ENCODE measurements at regions of chr19 and their contacts with region 1.

Region 1: GRCh38 chr19:4791170-4792018 is at the start of gene FEM1A:
- DNase-seq: peak; percentile 99
- H3K4me3 Mint-ChIP-seq: peak within 1 kb of the TSS; percentile 80
- H3K27ac Mint-ChIP-seq: peak within 1 kb of the TSS; percentile 90
- H3K4me1 Mint-ChIP-seq: peaks cover 31% of the 10 kb centered on the region
- H3K27me3 Mint-ChIP-seq: peaks cover 9% of the 10 kb centered on the region

Region 2: GRCh38 chr19:4723367-4724187 is 67.8 kb before region 1 on chr19 and contains the start of gene DPP9:
- CTCF ChIA-PET with region 1: interaction called, 14 read pairs
- DNase-seq: peak; percentile 98
- H3K4me3 Mint-ChIP-seq: peak within 1 kb of the TSS; percentile 94
- H3K27ac Mint-ChIP-seq: peak within 1 kb of the TSS; percentile 94
- H3K4me1 Mint-ChIP-seq: peaks cover 39% of the 10 kb centered on the region
- H3K27me3 Mint-ChIP-seq: peaks cover 5% of the 10 kb centered on the region

Region 3: GRCh38 chr19:4732680-4733114 is 58.7 kb before region 1 on chr19:
- CTCF ChIA-PET with region 1: interaction called, 43 read pairs
- DNase-seq: peak; percentile 74
- H3K4me3 Mint-ChIP-seq: no peak overlapping the region
- H3K27ac Mint-ChIP-seq: no peak overlapping the region
- H3K4me1 Mint-ChIP-seq: peaks cover 8% of the 10 kb centered on the region
- H3K27me3 Mint-ChIP-seq: peaks cover 39% of the 10 kb centered on the region